GM10248 (cell line): ENCODE measurements at regions of chr12 and their contacts with region 1.

Region 1: GRCh38 chr12:117202556-117202955 is 12.3 kb upstream of the FBXO21 start:
- DNase-seq: no peak
- CTCF ChIP-seq: no peak

Region 2: GRCh38 chr12:117212563-117213190 is 10.1 kb after region 1 on chr12:
- CTCF ChIA-PET with region 1: interaction called, 18 read pairs
- POLR2A ChIA-PET with region 1: no interaction called
- DNase-seq: peak; percentile 78
- CTCF ChIP-seq: peak; percentile 84

Region 3: GRCh38 chr12:117228239-117228638 is 25.7 kb after region 1 on chr12:
- CTCF ChIA-PET with region 1: no interaction called
- POLR2A ChIA-PET with region 1: no interaction called
- DNase-seq: no peak
- CTCF ChIP-seq: no peak

Region 4: DNA sequence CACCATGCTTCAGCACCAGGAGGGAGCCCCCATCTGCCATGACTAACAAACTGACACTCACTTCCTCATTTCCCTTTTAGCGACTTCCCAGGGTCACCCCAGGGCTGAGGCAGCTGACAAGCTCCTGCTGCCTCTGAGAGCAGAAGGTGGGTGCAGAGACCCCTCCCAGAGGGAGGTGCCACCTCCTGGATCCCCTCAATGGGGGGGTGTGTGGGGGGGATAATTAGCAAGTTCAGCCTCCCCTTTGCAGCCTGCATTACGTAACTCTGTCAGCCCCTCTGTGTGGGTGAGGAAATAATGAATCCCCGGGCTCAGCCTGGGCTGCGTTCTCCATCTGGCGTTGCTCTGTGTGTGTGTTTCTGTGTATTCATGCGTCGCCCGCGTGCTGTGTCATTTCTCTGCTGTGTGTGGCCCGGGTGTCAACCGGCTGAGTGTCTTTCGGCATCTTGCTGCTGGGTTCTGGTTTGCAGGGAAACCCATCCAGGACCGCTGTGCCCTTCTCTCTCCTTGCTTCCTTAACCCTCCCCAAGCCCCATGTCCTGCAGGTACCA is 130.8 kb after region 1 on chr12:
- CTCF ChIA-PET with region 1: no interaction called
- POLR2A ChIA-PET with region 1: no interaction called
- DNase-seq: no peak
- CTCF ChIP-seq: no peak